ENCODE measurements at regions of chr13 and their contacts with region 1.

Region 1: DNA sequence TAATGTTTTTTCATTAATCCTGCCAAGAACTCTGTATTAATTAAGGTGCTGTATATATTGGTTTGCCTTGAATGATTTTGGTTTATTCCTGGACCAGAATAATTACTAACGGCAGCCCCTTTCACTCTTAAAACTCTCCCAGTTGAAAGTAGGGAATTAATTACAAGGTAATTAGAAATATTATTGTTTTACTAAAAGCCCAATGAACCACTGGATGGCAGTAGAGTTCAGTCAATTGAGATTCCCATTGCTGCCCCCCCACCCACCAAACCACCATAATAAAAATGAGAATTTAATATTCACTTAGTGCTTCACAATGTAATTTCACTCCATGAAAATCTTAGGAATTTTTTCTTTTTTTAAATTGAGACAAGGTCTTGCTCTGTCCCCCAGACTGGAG is 13.7 kb downstream of the WBP4 start:
- DNase-seq: no peak
- H3K4me3 ChIP-seq: no peak overlapping the region
- H3K27ac ChIP-seq: no peak overlapping the region
- H3K4me1 ChIP-seq: no peaks in the 10 kb centered on the region
- H3K27me3 ChIP-seq: no peaks in the 10 kb centered on the region
- CTCF ChIP-seq: peak; percentile 38 to 52

Region 2: GRCh38 chr13:41132512-41133152 is 57.6 kb after region 1 on chr13 and contains the start of gene KBTBD6:
- CTCF ChIA-PET with region 1: no interaction called
- dilution Hi-C with region 1: no loop called
- in situ Hi-C with region 1: no loop called
- intact Hi-C with region 1: loop called (anchors 5 kb)
- DNase-seq: peak; percentile 100
- H3K4me3 ChIP-seq: peak within 1 kb of the TSS; percentile 76 to 93 (median 77)
- H3K27ac ChIP-seq: peak within 1 kb of the TSS; percentile 97
- H3K4me1 ChIP-seq: peaks cover 23% of the 10 kb centered on the region
- H3K27me3 ChIP-seq: no peaks in the 10 kb centered on the region
- CTCF ChIP-seq: no peak
- total RNA-seq, gene KBTBD6: 8.2 to 11.2 TPM

Region 3: GRCh38 chr13:41216160-41216559 is 141.1 kb after region 1 on chr13:
- CTCF ChIA-PET with region 1: no interaction called
- dilution Hi-C with region 1: no loop called
- in situ Hi-C with region 1: loop called in 1 of 2 experiments (anchors 10 kb)
- intact Hi-C with region 1: no loop called
- DNase-seq: peak; percentile 77
- H3K4me3 ChIP-seq: no peak overlapping the region
- H3K27ac ChIP-seq: peak overlapping the region; percentile 12
- H3K4me1 ChIP-seq: peaks cover 10% of the 10 kb centered on the region
- H3K27me3 ChIP-seq: no peaks in the 10 kb centered on the region
- CTCF ChIP-seq: no peak